ENCODE measurements at regions of chr15 and their contacts with region 1.

Region 1: DNA sequence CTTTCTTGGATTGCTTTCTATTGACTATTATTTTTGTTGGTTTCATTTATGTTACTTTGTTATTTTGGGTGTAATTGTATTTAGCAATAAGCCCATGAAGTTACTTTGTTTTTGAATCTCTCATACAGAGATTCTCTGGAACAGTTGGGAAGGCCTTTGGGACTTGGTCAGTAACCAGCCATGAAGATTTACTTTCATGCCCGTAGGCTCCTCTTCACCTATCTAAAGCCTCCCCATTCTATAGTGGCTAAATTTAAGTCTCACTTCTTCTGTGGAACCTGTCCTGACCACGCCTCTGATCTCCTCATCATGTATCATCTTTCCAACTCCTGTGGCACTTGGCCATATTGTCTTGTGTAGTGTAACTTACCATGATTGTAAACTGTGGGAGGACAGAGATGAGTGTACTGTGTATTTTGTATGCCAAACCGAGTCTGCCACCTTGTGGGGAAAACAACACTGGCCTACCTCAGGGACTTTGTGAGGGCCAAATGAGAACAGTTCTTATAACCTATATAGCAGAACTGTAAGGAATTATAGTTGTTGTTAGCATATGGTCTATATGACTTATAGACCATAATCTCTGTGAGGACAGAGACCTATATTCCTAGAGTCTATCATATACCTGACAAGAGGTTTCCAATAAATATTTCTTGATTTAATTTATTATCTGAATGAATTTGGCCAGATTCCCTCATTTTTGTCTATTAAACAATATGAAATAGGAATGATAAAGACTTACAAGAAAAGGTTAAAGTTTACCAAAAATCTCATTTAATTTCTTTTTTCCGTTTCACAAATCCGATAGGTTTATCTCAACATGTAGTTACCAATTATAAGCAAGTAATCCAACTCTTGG is 75.0 kb downstream of the STARD9 start:
- DNase-seq: peak; percentile 78
- ATAC-seq: peak; percentile 100
- H3K4me3 Mint-ChIP-seq: no peak overlapping the region
- H3K27ac Mint-ChIP-seq: no peak overlapping the region
- H3K4me1 Mint-ChIP-seq: peaks cover 2% of the 10 kb centered on the region
- H3K27me3 Mint-ChIP-seq: no peaks in the 10 kb centered on the region

Region 2: DNA sequence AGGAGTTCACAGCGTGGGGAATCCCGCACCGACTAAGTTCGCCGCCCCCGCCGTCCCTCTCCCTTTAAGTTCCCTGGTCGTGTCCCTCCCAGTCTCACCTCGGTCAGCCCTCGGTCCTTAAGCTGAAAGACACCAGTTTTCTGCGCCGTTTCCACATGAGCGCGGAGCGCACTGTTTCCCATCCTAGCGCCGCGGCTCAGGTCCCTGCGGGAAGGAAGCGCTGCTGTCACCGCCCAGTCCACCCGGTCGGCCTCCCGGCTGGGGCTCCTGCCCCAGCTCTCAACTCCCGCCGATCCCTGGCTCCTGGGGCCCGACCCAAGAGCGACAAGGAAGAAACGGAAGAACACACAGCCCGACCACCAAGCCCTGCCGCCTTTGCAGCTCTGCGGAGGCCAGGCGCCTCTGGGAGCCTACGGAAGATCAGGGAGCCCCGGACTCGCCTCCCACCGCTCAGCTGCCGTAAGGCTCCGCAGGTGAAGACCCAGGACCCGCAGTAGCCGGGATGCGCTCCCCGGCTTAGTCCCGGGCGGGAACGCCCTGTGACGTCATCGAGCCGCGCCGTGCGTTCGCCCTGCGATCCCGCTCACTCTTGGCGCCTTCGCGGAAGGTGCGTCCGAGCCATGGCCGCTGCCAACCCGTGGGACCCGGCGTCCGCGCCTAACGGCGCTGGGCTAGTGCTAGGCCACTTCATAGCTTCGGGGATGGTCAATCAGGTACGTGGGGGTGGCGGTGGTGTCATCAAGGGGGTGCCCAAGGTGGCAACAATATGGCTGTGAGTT is 102.0 kb before region 1 on chr15 and contains the starts of genes HAUS2 and LRRC57:
- CTCF ChIA-PET with region 1: no interaction called
- POLR2A ChIA-PET with region 1: no interaction called
- intact Hi-C with region 1: loop called (anchors 1 to 2 kb)
- DNase-seq: peak; percentile 93
- ATAC-seq: peak; percentile 89
- H3K4me3 Mint-ChIP-seq: peak within 1 kb of the TSS; percentile 96
- H3K27ac Mint-ChIP-seq: peak within 1 kb of the TSS; percentile 96
- H3K4me1 Mint-ChIP-seq: peaks cover 51% of the 10 kb centered on the region
- H3K27me3 Mint-ChIP-seq: no peaks in the 10 kb centered on the region
- total RNA-seq, gene HAUS2: 46.1 to 55.1 TPM
- total RNA-seq, gene LRRC57: 14.8 to 15.2 TPM

Measured in activated CD4-positive, alpha-beta T cell treated with anti-CD3 and anti-CD28 coated beads for 36 hours (primary cell).